ENCODE measurements at regions of chr17 and their contacts with region 1.

Region 1: GRCh38 chr17:10149573-10150399 is 48.6 kb downstream of the GAS7 start:
- DNase-seq: no peak
- ATAC-seq: peak; percentile 74
- H3K4me3 Mint-ChIP-seq: peak overlapping the region; percentile 69
- H3K27ac Mint-ChIP-seq: peak overlapping the region; percentile 85
- H3K4me1 Mint-ChIP-seq: peaks cover 54% of the 10 kb centered on the region
- H3K27me3 Mint-ChIP-seq: no peaks in the 10 kb centered on the region
- CTCF ChIP-seq: no peak

Region 2: GRCh38 chr17:10050597-10051101 is 99.1 kb before region 1 on chr17:
- CTCF ChIA-PET with region 1: no interaction called
- POLR2A ChIA-PET with region 1: interaction called, 7 read pairs
- intact Hi-C with region 1: loop called (anchors 1 kb)
- DNase-seq: no peak
- ATAC-seq: peak; percentile 7
- H3K4me3 Mint-ChIP-seq: peak overlapping the region; percentile 68
- H3K27ac Mint-ChIP-seq: peak overlapping the region; percentile 78
- H3K4me1 Mint-ChIP-seq: peaks cover 61% of the 10 kb centered on the region
- H3K27me3 Mint-ChIP-seq: no peaks in the 10 kb centered on the region
- CTCF ChIP-seq: no peak

Region 3: DNA sequence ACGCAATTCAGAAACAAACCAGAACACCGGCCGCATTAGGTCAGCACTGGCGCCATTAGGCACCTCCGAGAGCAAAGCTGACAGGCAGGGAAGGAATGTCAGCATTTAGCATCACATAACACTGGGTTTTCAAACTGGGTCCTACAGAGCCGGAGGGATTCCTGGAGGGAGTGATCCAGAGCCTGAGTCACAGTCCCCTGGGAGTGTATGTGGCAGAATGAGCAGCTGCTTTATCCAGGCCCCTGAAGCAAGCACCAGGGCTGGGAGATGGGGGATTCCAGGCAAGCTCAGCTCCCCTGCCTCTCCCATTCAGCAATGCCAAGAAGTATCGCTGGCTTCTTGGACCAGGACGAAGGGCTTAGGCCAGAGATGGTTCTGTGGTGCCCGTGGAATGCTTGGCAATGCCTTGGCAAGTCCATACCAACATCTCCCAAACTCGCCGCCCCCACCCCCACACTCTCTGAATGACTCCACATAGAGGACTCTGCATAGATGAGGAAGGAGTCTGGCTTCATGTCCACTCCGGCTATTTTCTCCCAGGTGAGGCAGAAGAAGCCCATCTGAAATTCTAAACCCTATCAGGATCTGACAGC is 28.2 kb after region 1 on chr17:
- CTCF ChIA-PET with region 1: no interaction called
- POLR2A ChIA-PET with region 1: no interaction called
- intact Hi-C with region 1: no loop called
- DNase-seq: no peak
- ATAC-seq: no peak
- H3K4me3 Mint-ChIP-seq: no peak overlapping the region
- H3K27ac Mint-ChIP-seq: no peak overlapping the region
- H3K4me1 Mint-ChIP-seq: peaks cover 16% of the 10 kb centered on the region
- H3K27me3 Mint-ChIP-seq: peaks cover 3% of the 10 kb centered on the region
- CTCF ChIP-seq: no peak